ENCODE measurements at regions of chr10 and their contacts with region 1.

Region 1: GRCh38 chr10:114876602-114877300 is 55.2 kb downstream of the FHIP2A start:
- DNase-seq: peak; percentile 83
- H3K4me3 ChIP-seq: no peak overlapping the region
- H3K27ac ChIP-seq: no peak overlapping the region
- H3K4me1 ChIP-seq: peaks cover 6% of the 10 kb centered on the region
- H3K27me3 ChIP-seq: no peaks in the 10 kb centered on the region
- CTCF ChIP-seq: peak; percentile 35 to 64 (median 51)
- POLR2A ChIP-seq: no peak

Region 2: GRCh38 chr10:114970515-114970914 is 93.8 kb after region 1 on chr10:
- intact Hi-C with region 1: no loop called
- DNase-seq: no peak
- H3K4me3 ChIP-seq: no peak overlapping the region
- H3K27ac ChIP-seq: no peak overlapping the region
- H3K4me1 ChIP-seq: no peaks in the 10 kb centered on the region
- H3K27me3 ChIP-seq: no peaks in the 10 kb centered on the region
- CTCF ChIP-seq: no peak
- POLR2A ChIP-seq: no peak

Region 3: GRCh38 chr10:115129752-115130151 is 253.0 kb after region 1 on chr10:
- intact Hi-C with region 1: loop called (anchors 10 kb)
- DNase-seq: no peak
- H3K4me3 ChIP-seq: no peak overlapping the region
- H3K27ac ChIP-seq: no peak overlapping the region
- H3K4me1 ChIP-seq: no peaks in the 10 kb centered on the region
- H3K27me3 ChIP-seq: no peaks in the 10 kb centered on the region
- CTCF ChIP-seq: peak in 1 of 3 experiments; percentile 17
- POLR2A ChIP-seq: no peak